CD4-positive, alpha-beta memory T cell (primary cell): ENCODE measurements at regions of chr1 and their contacts with region 1.

Region 1: GRCh38 chr1:151098126-151098525 is 27.6 kb downstream of the GABPB2 start:
- DNase-seq: no peak
- H3K4me3 ChIP-seq: no peak overlapping the region
- H3K4me3 Mint-ChIP-seq: no peak overlapping the region
- H3K27ac ChIP-seq: no peak overlapping the region
- H3K27ac Mint-ChIP-seq: no peak overlapping the region
- H3K4me1 ChIP-seq: no peaks in the 10 kb centered on the region
- H3K4me1 Mint-ChIP-seq: no peaks in the 10 kb centered on the region
- H3K27me3 ChIP-seq: no peaks in the 10 kb centered on the region
- H3K27me3 Mint-ChIP-seq: no peaks in the 10 kb centered on the region

Region 2: GRCh38 chr1:151024540-151025146 is 73.5 kb before region 1 on chr1:
- CTCF ChIA-PET with region 1: interaction called, 90 read pairs
- POLR2A ChIA-PET with region 1: interaction called, 8 read pairs
- intact Hi-C with region 1: loop called (anchors 1 kb)
- DNase-seq: peak; percentile 81 to 86 (median 85)
- H3K4me3 ChIP-seq: no peak overlapping the region
- H3K4me3 Mint-ChIP-seq: peak overlapping the region in 5 of 8 donors; percentile 22 to 65 (median 54)
- H3K27ac ChIP-seq: no peak overlapping the region
- H3K27ac Mint-ChIP-seq: peak overlapping the region; percentile 41 to 86 (median 73)
- H3K4me1 ChIP-seq: peaks cover 7% of the 10 kb centered on the region
- H3K4me1 Mint-ChIP-seq: peaks cover 5 to 11% (median 6%) of the 10 kb centered on the region in 4 donors
- H3K27me3 ChIP-seq: no peaks in the 10 kb centered on the region
- H3K27me3 Mint-ChIP-seq: no peaks in the 10 kb centered on the region

Region 3: DNA sequence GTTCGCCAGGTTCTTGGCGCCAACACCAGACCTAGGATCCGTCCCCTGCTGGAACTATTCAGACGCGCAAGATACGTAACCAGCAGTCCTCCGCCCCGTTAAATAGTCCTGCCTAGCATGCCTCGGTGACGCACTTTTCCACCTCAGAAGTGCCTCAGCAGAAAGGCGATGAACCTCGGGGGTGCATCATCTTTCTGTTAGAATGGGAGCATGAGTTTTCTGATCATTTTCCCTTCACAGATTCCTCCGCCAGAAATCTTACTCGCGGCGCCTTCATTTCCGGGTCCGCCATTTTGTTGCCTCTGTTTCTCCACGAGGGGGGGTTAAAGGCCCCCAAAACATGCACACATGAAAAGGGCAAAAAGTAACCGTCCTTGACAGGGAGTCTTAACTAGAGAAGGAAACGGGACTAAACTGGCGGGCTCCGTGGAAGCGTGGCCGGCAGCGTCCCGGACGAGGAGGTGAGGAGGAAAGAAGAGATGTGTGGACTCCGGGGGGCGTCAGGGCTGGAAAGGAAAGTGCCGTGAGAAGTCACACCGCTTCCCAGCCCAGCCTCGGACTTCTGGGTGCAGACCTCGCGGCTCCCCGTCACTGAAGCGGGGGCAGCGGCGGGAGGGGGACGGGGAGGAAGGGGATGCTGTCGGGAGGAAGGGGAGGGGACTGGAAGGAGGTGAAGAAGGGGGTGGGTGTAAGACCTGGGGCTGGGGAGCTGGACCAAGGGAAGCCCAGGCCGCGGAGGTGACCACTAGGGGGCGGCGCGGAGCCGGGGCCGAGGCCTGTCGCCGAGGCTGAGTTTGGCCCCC is 27.5 kb before region 1 on chr1 and contains the start of gene GABPB2:
- CTCF ChIA-PET with region 1: interaction called, 16 read pairs
- POLR2A ChIA-PET with region 1: interaction called, 3 read pairs
- intact Hi-C with region 1: no loop called
- DNase-seq: peak; percentile 87 to 96 (median 88)
- H3K4me3 ChIP-seq: peak within 1 kb of the TSS; percentile 57 to 96
- H3K4me3 Mint-ChIP-seq: peak within 1 kb of the TSS; percentile 95 to 100 (median 99)
- H3K27ac ChIP-seq: peak within 1 kb of the TSS; percentile 97
- H3K27ac Mint-ChIP-seq: peak within 1 kb of the TSS; percentile 97 to 100 (median 100)
- H3K4me1 ChIP-seq: peaks cover 17% of the 10 kb centered on the region
- H3K4me1 Mint-ChIP-seq: peaks cover 13 to 34% (median 23%) of the 10 kb centered on the region in 4 donors
- H3K27me3 ChIP-seq: no peaks in the 10 kb centered on the region
- H3K27me3 Mint-ChIP-seq: no peaks in the 10 kb centered on the region
- total RNA-seq, gene GABPB2: 36.8 to 42.8 TPM

Region 4: GRCh38 chr1:151130987-151131586 is 33.0 kb after region 1 on chr1:
- CTCF ChIA-PET with region 1: interaction called, 14 read pairs
- POLR2A ChIA-PET with region 1: interaction called, 3 read pairs
- intact Hi-C with region 1: no loop called
- DNase-seq: peak; percentile 59 to 85 (median 70)
- H3K4me3 ChIP-seq: peak overlapping the region in 1 of 2 donors; percentile 17
- H3K4me3 Mint-ChIP-seq: peak overlapping the region; percentile 50 to 85 (median 70)
- H3K27ac ChIP-seq: no peak overlapping the region
- H3K27ac Mint-ChIP-seq: peak overlapping the region in 6 of 7 donors; percentile 42 to 80 (median 63)
- H3K4me1 ChIP-seq: peaks cover 14% of the 10 kb centered on the region
- H3K4me1 Mint-ChIP-seq: peaks cover 2 to 11% (median 7%) of the 10 kb centered on the region in 4 donors
- H3K27me3 ChIP-seq: peaks cover 6% of the 10 kb centered on the region
- H3K27me3 Mint-ChIP-seq: peaks cover 3 to 11% of the 10 kb centered on the region in 2 donors

Region 5: DNA sequence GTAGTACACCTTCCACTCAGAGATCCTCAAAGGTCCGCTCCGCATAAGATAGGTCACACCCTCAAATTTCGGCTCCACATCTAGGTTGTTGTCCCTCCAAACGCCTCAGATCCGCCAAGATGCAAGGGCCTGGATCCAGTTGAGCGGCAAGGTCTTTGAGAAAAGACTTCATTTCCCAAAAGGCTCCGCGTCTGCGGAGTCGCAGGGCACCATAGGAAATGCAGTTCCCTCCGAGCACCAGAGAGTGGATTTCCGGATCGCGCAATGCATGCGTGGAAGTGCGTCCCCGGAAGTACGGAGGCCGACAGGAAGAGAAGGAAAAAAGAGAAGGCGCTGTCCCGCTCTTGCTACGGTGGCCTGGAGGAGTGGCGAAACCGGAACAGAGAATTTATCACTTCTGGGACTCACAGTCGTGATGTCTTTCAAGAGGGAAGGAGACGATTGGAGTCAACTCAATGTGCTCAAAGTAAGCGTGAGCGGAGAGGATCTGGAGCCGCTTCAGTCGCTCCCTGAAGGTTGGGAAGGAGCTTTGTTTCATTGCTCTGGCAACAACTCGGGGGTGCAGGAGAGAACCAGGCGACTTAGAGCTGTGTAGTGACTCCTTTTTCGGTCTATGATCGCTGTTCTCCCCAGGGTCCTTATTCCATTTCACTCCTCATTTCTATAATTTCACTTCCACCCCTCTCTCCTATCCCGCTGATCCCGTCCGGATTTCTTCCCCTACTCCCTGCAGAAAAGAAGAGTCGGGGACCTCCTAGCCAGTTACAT is 67.8 kb after region 1 on chr1 and contains the starts of genes LYSMD1 and SCNM1:
- CTCF ChIA-PET with region 1: interaction called, 9 read pairs
- POLR2A ChIA-PET with region 1: interaction called, 11 read pairs
- intact Hi-C with region 1: no loop called
- DNase-seq: peak; percentile 97 to 98 (median 97)
- H3K4me3 ChIP-seq: peak within 1 kb of the TSS; percentile 91 to 99
- H3K4me3 Mint-ChIP-seq: peak within 1 kb of the TSS; percentile 94 to 100 (median 98)
- H3K27ac ChIP-seq: peak within 1 kb of the TSS; percentile 73
- H3K27ac Mint-ChIP-seq: peak within 1 kb of the TSS; percentile 93 to 99 (median 98)
- H3K4me1 ChIP-seq: peaks cover 42% of the 10 kb centered on the region
- H3K4me1 Mint-ChIP-seq: peaks cover 29 to 62% (median 47%) of the 10 kb centered on the region in 4 donors
- H3K27me3 ChIP-seq: no peaks in the 10 kb centered on the region
- H3K27me3 Mint-ChIP-seq: peaks cover 2% of the 10 kb centered on the region in 2 donors
- total RNA-seq, gene LYSMD1: 1.0 to 1.3 TPM
- total RNA-seq, gene SCNM1: 57.4 to 61.4 TPM